ENCODE measurements at regions of chr18 and their contacts with region 1.

Region 1: DNA sequence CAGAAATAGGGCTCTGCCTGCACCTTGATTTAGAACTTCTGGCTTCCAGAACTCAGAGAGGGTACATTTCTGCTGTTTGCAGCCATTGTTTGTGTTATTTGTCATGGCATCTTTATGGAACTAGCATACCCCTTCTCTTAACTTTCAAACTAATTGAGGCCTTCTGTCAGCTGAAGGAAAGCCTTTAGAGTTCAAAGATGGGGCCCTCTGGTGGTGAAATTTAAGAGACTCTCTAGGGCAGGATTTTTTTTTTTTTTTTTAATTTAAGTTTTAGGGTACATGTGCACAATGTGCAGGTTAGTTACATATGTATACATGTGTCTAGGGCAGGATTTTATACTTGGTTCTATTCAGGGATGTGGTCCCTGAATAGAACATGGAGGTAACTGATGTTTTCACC is 260.6 kb upstream of the LINC00305 start:
- DNase-seq: no peak
- ATAC-seq: no peak
- H3K4me3 ChIP-seq: no peak overlapping the region
- H3K27ac ChIP-seq: no peak overlapping the region
- H3K4me1 ChIP-seq: no peaks in the 10 kb centered on the region
- H3K27me3 ChIP-seq: no peaks in the 10 kb centered on the region
- CTCF ChIP-seq: peak; percentile 15 to 53 (median 36)
- POLR2A ChIP-seq: no peak

Region 2: GRCh38 chr18:64037812-64038414 is 371.6 kb before region 1 on chr18:
- intact Hi-C with region 1: loop called in 1 of 10 experiments (anchors 10 kb)
- DNase-seq: no peak
- ATAC-seq: no peak
- H3K4me3 ChIP-seq: no peak overlapping the region
- H3K27ac ChIP-seq: no peak overlapping the region
- H3K4me1 ChIP-seq: no peaks in the 10 kb centered on the region
- H3K27me3 ChIP-seq: peaks cover 0 to 4% (median 0%) of the 10 kb centered on the region in 9 donors
- CTCF ChIP-seq: peak; percentile 32 to 68 (median 56)
- POLR2A ChIP-seq: no peak

Region 3: GRCh38 chr18:64100116-64100922 is 309.2 kb before region 1 on chr18:
- intact Hi-C with region 1: loop called in 1 of 10 experiments (anchors 5 kb)
- DNase-seq: no peak
- ATAC-seq: no peak
- H3K4me3 ChIP-seq: no peak overlapping the region
- H3K27ac ChIP-seq: no peak overlapping the region
- H3K4me1 ChIP-seq: no peaks in the 10 kb centered on the region
- H3K27me3 ChIP-seq: peaks cover 0 to 1% (median 0%) of the 10 kb centered on the region in 9 donors
- CTCF ChIP-seq: no peak
- POLR2A ChIP-seq: no peak

Region 4: DNA sequence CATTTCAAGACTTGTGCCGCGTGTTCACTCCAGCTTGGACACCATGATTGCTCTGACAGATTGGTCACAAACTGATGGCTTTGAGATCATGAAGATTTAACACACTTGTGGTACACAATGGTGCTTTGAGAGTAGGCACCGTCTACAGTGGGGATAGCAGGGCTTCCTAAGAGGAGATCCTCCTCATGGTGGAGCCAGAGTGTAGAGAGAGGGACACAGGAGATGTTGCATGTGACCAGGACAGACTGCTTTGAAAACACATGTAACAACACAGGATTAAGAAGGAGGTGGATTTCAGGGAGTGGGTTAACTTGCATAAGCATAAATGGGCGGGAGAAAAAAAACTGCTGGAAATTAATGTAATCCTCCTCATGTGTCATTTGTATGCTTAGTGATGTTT is 164.9 kb before region 1 on chr18:
- intact Hi-C with region 1: loop called in 4 of 10 experiments (anchors 5 to 10 kb)
- DNase-seq: no peak
- ATAC-seq: peak; percentile 41 to 68 (median 57)
- H3K4me3 ChIP-seq: no peak overlapping the region
- H3K27ac ChIP-seq: no peak overlapping the region
- H3K4me1 ChIP-seq: peaks cover 0 to 15% (median 2%) of the 10 kb centered on the region in 12 donors
- H3K27me3 ChIP-seq: no peaks in the 10 kb centered on the region
- CTCF ChIP-seq: peak in 11 of 12 donors; percentile 12 to 46 (median 30)
- POLR2A ChIP-seq: no peak

Region 5: DNA sequence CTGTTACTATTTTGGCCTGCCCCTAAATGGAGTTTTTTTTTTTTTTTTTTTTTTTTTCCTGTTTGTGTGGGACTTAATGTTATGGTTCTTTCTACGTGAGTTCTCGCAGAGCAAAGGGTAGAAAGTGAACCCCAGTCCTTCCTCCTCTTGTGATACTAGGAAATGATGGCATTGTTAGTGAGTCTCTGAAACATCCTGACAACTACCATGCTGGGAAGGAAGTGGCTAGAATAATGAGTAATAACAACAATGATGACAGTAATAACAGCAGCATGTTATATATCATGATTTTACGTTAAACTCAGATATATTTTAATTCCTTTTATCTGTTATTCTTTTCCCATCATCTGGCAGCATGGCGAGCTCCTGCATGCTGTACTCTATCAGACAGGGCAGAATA is 44.4 kb before region 1 on chr18:
- intact Hi-C with region 1: no loop called
- DNase-seq: no peak
- ATAC-seq: no peak
- H3K4me3 ChIP-seq: no peak overlapping the region
- H3K27ac ChIP-seq: no peak overlapping the region
- H3K4me1 ChIP-seq: no peaks in the 10 kb centered on the region
- H3K27me3 ChIP-seq: no peaks in the 10 kb centered on the region
- CTCF ChIP-seq: no peak
- POLR2A ChIP-seq: no peak

Measured in heart left ventricle (tissue), 16 donors.